ENCODE measurements at regions of chr14 and their contacts with region 1.

Region 1: GRCh38 chr14:85516239-85517112 is 13.5 kb upstream of the FLRT2 start:
- DNase-seq: no peak
- ATAC-seq: no peak
- H3K4me3 ChIP-seq: no peak overlapping the region
- H3K27ac ChIP-seq: no peak overlapping the region
- H3K4me1 ChIP-seq: peaks cover 29% of the 10 kb centered on the region
- H3K27me3 ChIP-seq: no peaks in the 10 kb centered on the region
- CTCF ChIP-seq: no peak
- EP300 ChIP-seq: no peak
- POLR2A ChIP-seq: no peak
- RAD21 ChIP-seq: no peak

Region 2: GRCh38 chr14:85010186-85010585 is 506.3 kb before region 1 on chr14:
- CTCF ChIA-PET with region 1: no interaction called
- POLR2A ChIA-PET with region 1: no interaction called
- in situ Hi-C with region 1: no loop called
- intact Hi-C with region 1: no loop called
- DNase-seq: no peak
- ATAC-seq: no peak
- H3K4me3 ChIP-seq: no peak overlapping the region
- H3K27ac ChIP-seq: no peak overlapping the region
- H3K4me1 ChIP-seq: no peaks in the 10 kb centered on the region
- H3K27me3 ChIP-seq: no peaks in the 10 kb centered on the region
- CTCF ChIP-seq: no peak
- EP300 ChIP-seq: no peak
- POLR2A ChIP-seq: no peak
- RAD21 ChIP-seq: no peak

Region 3: DNA sequence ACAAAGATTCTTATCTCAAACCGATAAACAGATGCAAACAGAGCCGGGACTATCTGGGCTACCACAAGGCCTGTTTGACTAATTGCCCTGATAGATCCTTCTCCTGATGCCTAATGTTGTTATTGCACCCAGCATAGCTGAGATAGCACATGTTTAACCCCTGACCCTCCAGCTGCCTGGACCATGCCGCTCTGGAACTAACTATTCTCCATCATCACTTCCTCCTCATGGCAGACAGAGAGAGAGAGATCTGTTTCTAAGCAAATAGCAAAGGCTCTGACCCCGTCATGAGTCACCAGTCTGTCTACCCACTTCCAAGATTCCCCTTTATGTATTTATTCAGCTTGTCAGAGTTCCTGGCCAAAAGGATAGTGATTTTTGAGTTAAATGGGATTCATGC is 44.7 kb before region 1 on chr14:
- CTCF ChIA-PET with region 1: no interaction called
- POLR2A ChIA-PET with region 1: no interaction called
- in situ Hi-C with region 1: no loop called
- intact Hi-C with region 1: loop called (anchors 5 kb)
- DNase-seq: peak; percentile 77
- ATAC-seq: peak; percentile 95
- H3K4me3 ChIP-seq: no peak overlapping the region
- H3K27ac ChIP-seq: no peak overlapping the region
- H3K4me1 ChIP-seq: peaks cover 10% of the 10 kb centered on the region; the same call in 1 of the 2 replicates
- H3K27me3 ChIP-seq: no peaks in the 10 kb centered on the region; a peak in 1 of 5 replicates
- CTCF ChIP-seq: no peak
- EP300 ChIP-seq: 0 out of 4 replicates have a peak, but pooled peaks of 1 of the 2 experiments have one; percentile 9
- POLR2A ChIP-seq: no peak
- RAD21 ChIP-seq: no peak

Region 4: DNA sequence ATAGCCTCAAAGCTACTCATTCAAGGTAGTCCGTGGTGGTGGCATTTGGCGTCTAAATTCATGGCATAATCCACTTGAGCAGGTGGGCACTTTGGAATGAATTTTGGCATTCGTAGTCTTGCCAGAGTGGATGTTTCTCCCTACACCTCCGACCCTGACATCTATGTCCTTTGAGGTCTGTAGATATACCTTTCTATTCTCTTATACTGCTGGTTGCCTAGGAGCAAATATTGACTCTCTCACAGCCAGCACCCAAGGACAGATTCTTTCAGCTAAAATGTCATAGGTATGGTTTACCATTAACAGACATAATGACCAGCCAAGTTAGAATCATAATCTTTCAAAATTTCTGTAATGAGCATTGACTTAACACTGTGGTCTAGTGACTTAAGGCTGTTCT is 33.9 kb before region 1 on chr14:
- CTCF ChIA-PET with region 1: no interaction called
- POLR2A ChIA-PET with region 1: no interaction called
- in situ Hi-C with region 1: no loop called
- intact Hi-C with region 1: loop called (anchors 1 kb)
- DNase-seq: peak; percentile 71
- ATAC-seq: peak; percentile 100
- H3K4me3 ChIP-seq: no peak overlapping the region
- H3K27ac ChIP-seq: peak overlapping the region; percentile 59
- H3K4me1 ChIP-seq: peaks cover 24% of the 10 kb centered on the region
- H3K27me3 ChIP-seq: no peaks in the 10 kb centered on the region
- CTCF ChIP-seq: no peak
- EP300 ChIP-seq: peak in 1 of 2 experiments; percentile 47; a peak in 2 of 4 replicates
- POLR2A ChIP-seq: no peak
- RAD21 ChIP-seq: no peak

Measured in HepG2 (cell line).